PC-9 (cell line): ENCODE measurements at regions of chr6 and their contacts with region 1.

Region 1: GRCh38 chr6:95431637-95432228 is 145.6 kb upstream of the MANEA start:
- DNase-seq: peak; percentile 34 to 38
- H3K4me3 ChIP-seq: no peak overlapping the region
- H3K27ac ChIP-seq: no peak overlapping the region
- H3K4me1 ChIP-seq: no peaks in the 10 kb centered on the region
- H3K27me3 ChIP-seq: no peaks in the 10 kb centered on the region
- CTCF ChIP-seq: peak; percentile 89

Region 2: GRCh38 chr6:95519228-95520037 is 87.7 kb after region 1 on chr6:
- CTCF ChIA-PET with region 1: no interaction called
- POLR2A ChIA-PET with region 1: interaction called, 12 read pairs
- intact Hi-C with region 1: no loop called
- DNase-seq: peak; percentile 69 to 83
- H3K4me3 ChIP-seq: peak overlapping the region; percentile 57; the same call in 1 of the 2 replicates
- H3K27ac ChIP-seq: 0 out of 2 replicates have a peak overlapping the region, but pooled peaks have one; percentile 27
- H3K4me1 ChIP-seq: peaks cover 5% of the 10 kb centered on the region; the same call in 1 of the 2 replicates
- H3K27me3 ChIP-seq: no peaks in the 10 kb centered on the region
- CTCF ChIP-seq: no peak

Region 3: GRCh38 chr6:95577304-95578105 is 145.8 kb after region 1 on chr6 and contains the start of gene MANEA:
- CTCF ChIA-PET with region 1: no interaction called
- POLR2A ChIA-PET with region 1: no interaction called
- intact Hi-C with region 1: loop called (anchors 10 kb)
- DNase-seq: peak; percentile 70 to 78
- H3K4me3 ChIP-seq: peak within 1 kb of the TSS; percentile 96
- H3K27ac ChIP-seq: peak within 1 kb of the TSS; percentile 65
- H3K4me1 ChIP-seq: peaks cover 29% of the 10 kb centered on the region
- H3K27me3 ChIP-seq: no peaks in the 10 kb centered on the region
- CTCF ChIP-seq: no peak
- total RNA-seq, gene MANEA: 7.2 and 11.0 TPM in 2 replicates

Region 4: GRCh38 chr6:95866732-95867131 is 435.0 kb after region 1 on chr6:
- CTCF ChIA-PET with region 1: no interaction called
- POLR2A ChIA-PET with region 1: no interaction called
- intact Hi-C with region 1: loop called (anchors 10 kb)
- DNase-seq: peak in 1 of 2 experiments; percentile 2
- H3K4me3 ChIP-seq: no peak overlapping the region
- H3K27ac ChIP-seq: no peak overlapping the region
- H3K4me1 ChIP-seq: no peaks in the 10 kb centered on the region
- H3K27me3 ChIP-seq: no peaks in the 10 kb centered on the region
- CTCF ChIP-seq: peak; percentile 52; the same call in 1 of the 2 replicates

Region 5: DNA sequence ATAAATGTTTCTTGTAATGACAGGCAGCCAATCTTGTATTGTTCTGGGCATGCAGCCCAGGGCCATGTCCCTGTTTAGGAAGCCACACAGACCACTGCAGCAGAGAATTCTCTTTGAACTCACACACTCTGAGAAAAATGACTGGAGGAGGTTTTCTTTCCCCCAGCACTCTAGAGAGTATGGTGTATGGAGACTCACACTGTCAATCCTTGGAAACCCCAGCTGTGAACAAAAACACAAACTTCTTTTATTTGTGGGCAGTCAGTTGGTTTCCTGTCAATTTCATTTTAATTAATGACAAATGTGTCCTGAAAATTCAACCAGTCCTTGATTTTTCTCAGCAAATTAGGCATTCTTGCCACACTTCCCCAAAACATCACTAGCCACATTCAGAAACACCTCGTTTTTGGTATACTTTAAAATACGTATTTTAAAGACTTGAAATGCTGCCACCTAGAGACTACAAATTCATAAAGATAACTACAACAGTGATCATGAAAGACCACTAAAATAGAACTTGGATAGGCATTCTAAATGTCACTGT is 1037.0 kb after region 1 on chr6:
- CTCF ChIA-PET with region 1: no interaction called
- POLR2A ChIA-PET with region 1: no interaction called
- intact Hi-C with region 1: loop called (anchors 1 kb)
- DNase-seq: no peak
- H3K4me3 ChIP-seq: no peak overlapping the region
- H3K27ac ChIP-seq: no peak overlapping the region
- H3K4me1 ChIP-seq: no peaks in the 10 kb centered on the region
- H3K27me3 ChIP-seq: no peaks in the 10 kb centered on the region
- CTCF ChIP-seq: peak; percentile 60; the same call in 1 of the 2 replicates

Region 6: DNA sequence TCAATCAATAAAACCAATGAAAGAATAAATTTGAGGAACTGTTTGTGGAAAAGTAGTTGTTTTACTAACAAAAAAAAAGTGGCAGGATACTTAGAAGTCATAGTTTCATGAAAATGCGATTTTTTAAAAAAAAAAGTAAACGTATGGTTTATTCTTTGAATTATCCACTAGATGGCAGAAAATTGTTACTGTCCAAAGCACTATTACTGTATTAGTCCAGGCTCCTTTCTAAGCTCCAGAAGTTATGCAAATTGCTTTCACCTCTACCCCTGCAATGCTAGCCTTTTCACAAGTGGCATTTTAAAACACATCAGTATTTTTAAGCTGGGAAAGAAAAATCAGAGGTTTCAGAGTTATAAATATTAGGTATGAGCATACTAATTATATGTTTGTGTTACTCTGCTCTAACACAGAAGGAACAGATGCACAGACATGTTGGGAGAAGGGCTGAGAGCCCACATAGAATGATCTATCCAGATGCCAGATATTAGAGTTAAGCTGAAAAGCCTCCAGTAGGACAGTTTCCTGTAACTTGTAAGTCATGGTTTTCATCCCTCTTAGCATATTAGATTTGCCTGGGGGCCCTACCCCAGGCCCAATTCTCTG is 1195.1 kb after region 1 on chr6:
- CTCF ChIA-PET with region 1: no interaction called
- POLR2A ChIA-PET with region 1: no interaction called
- intact Hi-C with region 1: loop called (anchors 10 kb)
- DNase-seq: no peak
- H3K4me3 ChIP-seq: no peak overlapping the region
- H3K27ac ChIP-seq: no peak overlapping the region
- H3K4me1 ChIP-seq: no peaks in the 10 kb centered on the region
- H3K27me3 ChIP-seq: no peaks in the 10 kb centered on the region
- CTCF ChIP-seq: peak; percentile 68

Region 7: GRCh38 chr6:97059473-97059872 is 1627.7 kb after region 1 on chr6:
- CTCF ChIA-PET with region 1: no interaction called
- POLR2A ChIA-PET with region 1: no interaction called
- intact Hi-C with region 1: loop called (anchors 10 kb)
- DNase-seq: peak in 1 of 2 experiments; percentile 54
- H3K4me3 ChIP-seq: no peak overlapping the region
- H3K27ac ChIP-seq: no peak overlapping the region
- H3K4me1 ChIP-seq: no peaks in the 10 kb centered on the region
- H3K27me3 ChIP-seq: no peaks in the 10 kb centered on the region
- CTCF ChIP-seq: peak; percentile 74